GM12878 (cell line): ENCODE measurements at regions of chr1 and their contacts with region 1.

Region 1: DNA sequence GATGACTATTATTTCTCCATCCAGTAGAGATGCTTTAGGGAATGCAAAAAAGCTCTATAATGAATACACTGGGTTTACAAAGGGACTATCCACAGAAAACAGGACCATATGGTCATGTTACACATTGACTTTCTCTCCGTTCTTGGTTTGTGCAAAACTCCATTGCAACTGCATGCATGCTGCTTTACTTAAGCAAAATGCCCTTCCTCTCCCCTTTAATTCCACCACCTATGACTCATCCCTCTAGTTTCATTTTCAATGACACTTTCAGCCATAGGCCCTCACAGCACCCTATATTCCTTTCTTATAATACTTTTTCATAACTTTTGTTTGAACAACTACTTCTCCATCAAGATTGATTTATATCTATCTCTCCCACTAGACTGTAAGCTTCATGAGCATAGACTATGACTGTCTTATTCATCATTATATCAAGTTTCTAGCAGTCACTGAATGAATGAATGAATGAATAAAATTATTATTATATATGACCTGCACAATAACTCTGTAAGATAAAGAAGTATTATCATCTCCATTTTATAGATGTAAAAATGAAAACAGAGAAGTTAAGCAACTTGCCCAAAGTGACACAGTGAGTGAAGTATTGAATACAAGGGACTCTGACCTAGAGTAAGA is 248.9 kb downstream of the PLPP3 start:
- DNase-seq: peak; percentile 68
- ATAC-seq: peak; percentile 70
- H3K4me3 ChIP-seq: no peak overlapping the region
- H3K27ac ChIP-seq: no peak overlapping the region
- H3K4me1 ChIP-seq: no peaks in the 10 kb centered on the region; the same call in 1 of the 2 replicates
- H3K27me3 ChIP-seq: no peaks in the 10 kb centered on the region
- CTCF ChIP-seq: no peak
- EP300 ChIP-seq: peak; percentile 41 to 67; a peak in 2 of 4 replicates
- POLR2A ChIP-seq: no peak
- RAD21 ChIP-seq: no peak

Region 2: DNA sequence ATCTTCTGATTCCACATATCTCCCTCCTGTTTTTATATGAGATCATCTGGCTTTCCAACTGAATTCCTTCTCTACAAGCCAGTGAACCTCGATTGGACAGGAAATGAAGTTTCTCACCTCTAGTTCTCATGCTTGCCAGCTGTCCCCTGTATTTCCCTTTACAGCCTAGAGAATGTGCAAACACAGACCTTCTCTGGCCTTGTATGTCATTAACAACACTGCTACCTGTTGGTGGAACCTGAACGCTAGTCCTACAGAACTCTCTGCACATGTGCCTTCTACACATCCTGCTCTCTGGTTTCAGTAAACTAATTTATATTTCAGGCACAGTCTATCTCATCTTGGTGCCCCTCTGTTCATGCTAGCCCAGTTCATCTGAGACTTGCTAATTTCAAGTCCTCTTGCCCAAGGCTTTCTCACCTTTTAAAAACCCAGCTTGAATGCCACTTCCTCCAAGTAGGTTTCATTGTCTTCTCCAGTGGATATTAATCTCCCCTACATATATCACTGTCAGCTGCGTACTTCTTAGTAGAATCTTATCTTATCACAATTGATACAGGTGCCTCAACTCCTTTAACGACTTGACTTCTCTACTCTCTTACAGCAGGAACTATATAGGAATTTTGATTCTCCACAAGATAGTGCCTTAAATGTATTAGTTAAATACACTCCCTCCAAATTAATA is 301.0 kb before region 1 on chr1:
- CTCF ChIA-PET with region 1: no interaction called
- POLR2A ChIA-PET with region 1: no interaction called
- RAD21 ChIA-PET with region 1: no interaction called
- SMC1A ChIA-PET with region 1: no interaction called
- in situ Hi-C with region 1: no loop called
- intact Hi-C with region 1: loop called (anchors 5 kb)
- DNase-seq: peak; percentile 5
- ATAC-seq: peak; percentile 51
- H3K4me3 ChIP-seq: no peak overlapping the region
- H3K27ac ChIP-seq: no peak overlapping the region
- H3K4me1 ChIP-seq: no peaks in the 10 kb centered on the region; the same call in 1 of the 2 replicates
- H3K27me3 ChIP-seq: no peaks in the 10 kb centered on the region
- CTCF ChIP-seq: 0 out of 6 replicates have a peak, but pooled peaks of 1 of the 3 experiments have one; percentile 0
- EP300 ChIP-seq: no peak
- POLR2A ChIP-seq: no peak
- RAD21 ChIP-seq: peak; percentile 33; the same call in 1 of the 2 replicates

Region 3: DNA sequence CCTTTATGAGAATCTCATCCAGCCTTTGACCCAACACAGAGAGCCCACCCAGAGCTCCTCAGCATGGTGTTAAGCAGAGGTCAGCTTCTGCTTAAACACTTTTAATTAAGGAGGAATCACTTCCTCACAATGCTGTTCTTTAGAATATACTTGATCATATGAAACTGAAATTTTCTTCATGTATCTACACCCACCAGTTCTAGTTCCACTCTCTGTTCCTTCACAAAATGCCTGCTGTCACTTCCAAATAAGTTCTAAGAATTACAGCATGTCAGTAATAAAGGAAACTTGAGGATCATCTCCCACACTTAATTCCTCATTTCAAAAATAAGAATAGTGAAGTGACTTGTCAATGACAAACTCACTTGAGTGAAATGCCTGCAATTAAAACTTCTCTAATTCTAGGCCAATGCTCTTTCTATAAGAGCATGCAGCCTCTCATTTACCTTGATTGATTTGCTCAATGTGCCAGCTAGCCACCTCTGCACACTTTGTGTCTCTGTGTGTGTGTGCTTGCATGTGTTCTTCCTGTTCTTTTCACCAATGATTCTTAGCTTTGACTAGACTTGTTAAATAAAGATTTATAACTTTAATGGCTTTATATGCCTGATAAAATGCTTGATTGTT is 107.5 kb before region 1 on chr1:
- CTCF ChIA-PET with region 1: interaction called, 3 read pairs
- POLR2A ChIA-PET with region 1: interaction called, 5 read pairs
- RAD21 ChIA-PET with region 1: interaction called, 11 read pairs
- SMC1A ChIA-PET with region 1: interaction called, 5 read pairs
- in situ Hi-C with region 1: no loop called
- intact Hi-C with region 1: no loop called
- DNase-seq: no peak
- ATAC-seq: peak; percentile 93
- H3K4me3 ChIP-seq: no peak overlapping the region
- H3K27ac ChIP-seq: no peak overlapping the region
- H3K4me1 ChIP-seq: no peaks in the 10 kb centered on the region
- H3K27me3 ChIP-seq: no peaks in the 10 kb centered on the region
- CTCF ChIP-seq: no peak
- EP300 ChIP-seq: peak in 1 of 2 experiments; percentile 58; a peak in 1 of 4 replicates
- POLR2A ChIP-seq: no peak
- RAD21 ChIP-seq: no peak

Region 4: GRCh38 chr1:56291374-56291919 is 39.1 kb before region 1 on chr1:
- CTCF ChIA-PET with region 1: interaction called, 3 read pairs
- POLR2A ChIA-PET with region 1: interaction called, 4 read pairs
- RAD21 ChIA-PET with region 1: interaction called, 17 read pairs
- SMC1A ChIA-PET with region 1: interaction called, 37 read pairs
- in situ Hi-C with region 1: no loop called
- intact Hi-C with region 1: no loop called
- DNase-seq: no peak
- ATAC-seq: no peak
- H3K4me3 ChIP-seq: no peak overlapping the region
- H3K27ac ChIP-seq: no peak overlapping the region
- H3K4me1 ChIP-seq: no peaks in the 10 kb centered on the region
- H3K27me3 ChIP-seq: no peaks in the 10 kb centered on the region
- CTCF ChIP-seq: no peak
- EP300 ChIP-seq: no peak
- POLR2A ChIP-seq: no peak
- RAD21 ChIP-seq: no peak

Region 5: GRCh38 chr1:56469640-56470371 is 139.3 kb after region 1 on chr1:
- CTCF ChIA-PET with region 1: interaction called, 5 read pairs
- POLR2A ChIA-PET with region 1: interaction called, 9 read pairs
- RAD21 ChIA-PET with region 1: interaction called, 65 read pairs
- SMC1A ChIA-PET with region 1: interaction called, 23 read pairs
- in situ Hi-C with region 1: no loop called
- intact Hi-C with region 1: loop called (anchors 2 kb)
- DNase-seq: no peak
- ATAC-seq: peak; percentile 58
- H3K4me3 ChIP-seq: no peak overlapping the region
- H3K27ac ChIP-seq: no peak overlapping the region
- H3K4me1 ChIP-seq: peaks cover 8% of the 10 kb centered on the region; the same call in 1 of the 2 replicates
- H3K27me3 ChIP-seq: no peaks in the 10 kb centered on the region
- CTCF ChIP-seq: no peak
- EP300 ChIP-seq: no peak
- POLR2A ChIP-seq: no peak
- RAD21 ChIP-seq: no peak

Region 6: GRCh38 chr1:56525489-56526041 is 195.1 kb after region 1 on chr1:
- CTCF ChIA-PET with region 1: no interaction called
- POLR2A ChIA-PET with region 1: interaction called, 3 read pairs
- RAD21 ChIA-PET with region 1: interaction called, 6 read pairs
- SMC1A ChIA-PET with region 1: interaction called, 5 read pairs
- in situ Hi-C with region 1: no loop called
- intact Hi-C with region 1: loop called (anchors 5 kb)
- DNase-seq: peak; percentile 79
- ATAC-seq: peak; percentile 90
- H3K4me3 ChIP-seq: no peak overlapping the region
- H3K27ac ChIP-seq: peak overlapping the region; percentile 53; the same call in 1 of the 2 replicates
- H3K4me1 ChIP-seq: peaks cover 42% of the 10 kb centered on the region
- H3K27me3 ChIP-seq: no peaks in the 10 kb centered on the region
- CTCF ChIP-seq: no peak
- EP300 ChIP-seq: peak; percentile 79 to 92
- POLR2A ChIP-seq: no peak
- RAD21 ChIP-seq: no peak